HepG2 (cell line): ENCODE measurements at regions of chr1 and their contacts with region 1.

Region 1: GRCh38 chr1:248837794-248838356 is at the start of gene ZNF672:
- DNase-seq: peak; percentile 96
- ATAC-seq: peak; percentile 92
- H3K4me3 ChIP-seq: peak within 1 kb of the TSS; percentile 58 to 87 (median 83)
- H3K27ac ChIP-seq: peak within 1 kb of the TSS; percentile 96
- H3K4me1 ChIP-seq: peaks cover 66% of the 10 kb centered on the region
- H3K27me3 ChIP-seq: no peaks in the 10 kb centered on the region; a peak in 1 of 5 replicates
- CTCF ChIP-seq: 0 out of 2 replicates have a peak, but pooled peaks have one; percentile 9
- EP300 ChIP-seq: no peak
- POLR2A ChIP-seq: peak; percentile 80 to 87
- RAD21 ChIP-seq: no peak
- total RNA-seq, gene ZNF672: 16.8 and 17.2 TPM in 2 replicates

Region 2: GRCh38 chr1:248696261-248696660 is 141.6 kb before region 1 on chr1:
- CTCF ChIA-PET with region 1: no interaction called
- POLR2A ChIA-PET with region 1: no interaction called
- in situ Hi-C with region 1: no loop called
- intact Hi-C with region 1: loop called (anchors 1 kb)
- DNase-seq: peak; percentile 63
- ATAC-seq: peak; percentile 98
- H3K4me3 ChIP-seq: no peak overlapping the region
- H3K27ac ChIP-seq: no peak overlapping the region
- H3K4me1 ChIP-seq: no peaks in the 10 kb centered on the region
- H3K27me3 ChIP-seq: no peaks in the 10 kb centered on the region
- CTCF ChIP-seq: peak; percentile 79
- EP300 ChIP-seq: no peak
- POLR2A ChIP-seq: no peak
- RAD21 ChIP-seq: peak; percentile 65

Region 3: DNA sequence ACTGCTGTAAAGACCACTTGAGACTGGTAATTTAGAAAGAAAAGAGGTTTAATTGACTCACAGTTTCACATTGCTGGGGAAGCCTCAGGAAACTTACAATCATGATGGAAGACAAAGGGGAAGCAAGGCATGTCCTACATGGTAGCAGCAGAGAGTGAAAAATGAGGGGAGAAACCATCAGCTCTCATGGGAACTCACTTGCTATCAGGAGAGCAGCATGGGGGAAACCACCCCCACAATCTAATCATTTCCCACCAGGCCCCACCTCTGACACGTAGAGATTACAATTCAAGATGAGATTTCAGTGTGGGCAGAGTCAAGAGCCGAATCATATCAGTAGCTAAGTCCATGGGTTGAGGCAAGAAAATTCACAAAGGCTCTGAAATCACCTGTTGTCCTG is 58.5 kb before region 1 on chr1:
- CTCF ChIA-PET with region 1: no interaction called
- POLR2A ChIA-PET with region 1: no interaction called
- in situ Hi-C with region 1: no loop called
- intact Hi-C with region 1: no loop called
- DNase-seq: no peak
- ATAC-seq: no peak
- H3K4me3 ChIP-seq: no peak overlapping the region
- H3K27ac ChIP-seq: no peak overlapping the region
- H3K4me1 ChIP-seq: no peaks in the 10 kb centered on the region; the same call in 1 of the 2 replicates
- H3K27me3 ChIP-seq: no peaks in the 10 kb centered on the region
- CTCF ChIP-seq: no peak
- EP300 ChIP-seq: no peak
- POLR2A ChIP-seq: no peak
- RAD21 ChIP-seq: no peak

Region 4: GRCh38 chr1:248825909-248826760 is 11.7 kb before region 1 on chr1 and contains the start of gene SH3BP5L:
- CTCF ChIA-PET with region 1: no interaction called
- POLR2A ChIA-PET with region 1: interaction called, 108 read pairs
- in situ Hi-C with region 1: no loop called
- intact Hi-C with region 1: loop called (anchors 1 kb)
- DNase-seq: peak; percentile 93
- ATAC-seq: peak; percentile 94
- H3K4me3 ChIP-seq: peak within 1 kb of the TSS; percentile 71 to 92 (median 81)
- H3K27ac ChIP-seq: peak within 1 kb of the TSS; percentile 99
- H3K4me1 ChIP-seq: peaks cover 69% of the 10 kb centered on the region
- H3K27me3 ChIP-seq: no peaks in the 10 kb centered on the region; a peak in 1 of 5 replicates
- CTCF ChIP-seq: peak; percentile 88
- EP300 ChIP-seq: peak in 1 of 2 experiments; percentile 5; a peak in 2 of 4 replicates
- POLR2A ChIP-seq: peak; percentile 79 to 90
- RAD21 ChIP-seq: 0 out of 2 replicates have a peak, but pooled peaks have one; percentile 28
- total RNA-seq, gene SH3BP5L: 10.2 and 14.9 TPM in 2 replicates

Region 5: DNA sequence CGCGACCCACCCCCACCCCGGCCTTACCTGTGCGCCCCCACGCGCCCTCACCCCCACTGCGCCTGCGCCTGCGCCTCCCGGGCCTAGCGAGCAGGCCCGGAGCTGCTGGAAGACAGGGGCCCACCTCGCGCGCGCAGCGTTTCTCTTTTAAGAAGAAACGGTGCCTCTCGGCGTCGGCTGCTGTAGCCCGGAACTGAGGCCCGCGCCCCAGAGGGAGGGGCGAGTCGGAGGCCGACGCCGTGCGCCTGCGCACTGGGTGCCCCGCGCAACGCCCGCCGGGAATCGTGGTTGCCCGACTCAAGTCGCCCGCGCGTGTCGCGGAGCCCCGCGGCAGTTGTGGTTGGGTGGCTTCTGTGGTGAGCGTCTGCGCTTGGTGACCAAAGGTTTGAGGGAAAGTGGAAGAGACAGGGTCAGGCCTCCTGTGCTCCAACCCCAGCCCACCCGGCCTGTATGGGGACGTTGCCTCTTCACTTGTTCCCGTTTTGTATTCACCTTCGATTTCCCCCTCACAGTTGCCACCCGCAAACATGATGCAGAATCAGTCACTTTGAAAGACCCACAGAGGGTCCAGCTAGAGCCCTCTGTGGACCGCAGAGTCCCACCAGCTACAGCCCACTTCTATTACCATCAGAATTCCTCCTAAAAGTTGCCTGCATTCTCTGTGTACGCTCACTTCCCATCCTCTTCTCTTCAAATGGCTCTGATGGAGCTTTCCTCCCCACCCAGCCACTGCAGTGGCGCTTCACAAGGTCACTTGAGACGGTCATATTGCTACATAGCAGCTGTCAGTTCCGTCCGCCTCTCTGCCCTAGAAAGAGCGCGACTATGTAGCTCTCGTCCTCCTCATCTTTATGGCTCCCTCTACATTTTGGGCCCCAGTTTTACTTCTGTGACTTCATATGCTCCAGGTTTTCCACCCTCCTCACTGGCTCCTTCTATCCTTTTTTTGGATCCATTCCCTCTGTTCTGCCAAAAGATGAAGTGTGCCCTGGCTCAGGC is 21.3 kb after region 1 on chr1 and contains the start of gene ZNF692:
- CTCF ChIA-PET with region 1: interaction called, 3 read pairs
- POLR2A ChIA-PET with region 1: interaction called, 83 read pairs
- in situ Hi-C with region 1: no loop called
- intact Hi-C with region 1: loop called (anchors 1 kb)
- DNase-seq: peak; percentile 93
- ATAC-seq: peak; percentile 77
- H3K4me3 ChIP-seq: peak within 1 kb of the TSS; percentile 62 to 87 (median 83)
- H3K27ac ChIP-seq: peak within 1 kb of the TSS; percentile 79
- H3K4me1 ChIP-seq: peaks cover 51% of the 10 kb centered on the region
- H3K27me3 ChIP-seq: no peaks in the 10 kb centered on the region; a peak in 1 of 5 replicates
- CTCF ChIP-seq: no peak
- EP300 ChIP-seq: no peak
- POLR2A ChIP-seq: no peak; a peak in 1 of 4 replicates
- RAD21 ChIP-seq: no peak
- total RNA-seq, gene ZNF692: 6.2 and 27.3 TPM in 2 replicates

Region 6: DNA sequence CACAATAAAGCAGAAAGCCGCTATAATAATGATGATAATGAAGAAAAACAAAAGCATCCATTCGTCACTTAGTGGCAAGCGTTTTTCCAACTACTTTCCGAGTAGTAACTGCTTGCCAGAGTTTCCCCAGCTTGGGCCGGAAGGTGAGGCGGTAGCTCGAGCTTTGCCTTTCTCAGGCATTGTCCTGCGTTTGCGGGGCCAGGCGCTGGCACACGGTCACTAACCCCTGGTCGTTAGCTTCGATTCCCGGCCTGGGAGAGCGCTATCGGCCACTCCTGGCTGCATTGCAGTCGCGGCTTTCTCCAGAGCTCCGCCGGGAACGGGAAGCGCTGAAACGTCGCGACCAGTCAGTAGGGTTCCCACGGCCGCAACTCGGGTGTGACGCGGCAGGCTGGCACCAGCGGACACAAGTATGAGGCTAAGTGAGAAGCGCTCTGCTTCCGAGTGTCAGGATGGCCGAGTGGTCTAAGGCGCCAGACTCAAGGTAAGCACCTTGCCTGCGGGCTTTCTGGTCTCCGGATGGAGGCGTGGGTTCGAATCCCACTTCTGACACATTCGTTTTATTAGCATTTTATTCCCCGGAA is 35.6 kb after region 1 on chr1:
- CTCF ChIA-PET with region 1: no interaction called
- POLR2A ChIA-PET with region 1: interaction called, 25 read pairs
- in situ Hi-C with region 1: no loop called
- intact Hi-C with region 1: no loop called
- DNase-seq: peak; percentile 92
- ATAC-seq: peak; percentile 92
- H3K4me3 ChIP-seq: peak overlapping the region; percentile 60 to 87 (median 85)
- H3K27ac ChIP-seq: peak overlapping the region; percentile 95
- H3K4me1 ChIP-seq: peaks cover 9% of the 10 kb centered on the region
- H3K27me3 ChIP-seq: no peaks in the 10 kb centered on the region; a peak in 1 of 5 replicates
- CTCF ChIP-seq: peak; percentile 26; the same call in 1 of the 2 replicates
- EP300 ChIP-seq: no peak; a peak in 1 of 4 replicates
- POLR2A ChIP-seq: peak; percentile 28 to 72; a peak in 3 of 4 replicates
- RAD21 ChIP-seq: peak; percentile 32; the same call in 1 of the 2 replicates

Region 7: DNA sequence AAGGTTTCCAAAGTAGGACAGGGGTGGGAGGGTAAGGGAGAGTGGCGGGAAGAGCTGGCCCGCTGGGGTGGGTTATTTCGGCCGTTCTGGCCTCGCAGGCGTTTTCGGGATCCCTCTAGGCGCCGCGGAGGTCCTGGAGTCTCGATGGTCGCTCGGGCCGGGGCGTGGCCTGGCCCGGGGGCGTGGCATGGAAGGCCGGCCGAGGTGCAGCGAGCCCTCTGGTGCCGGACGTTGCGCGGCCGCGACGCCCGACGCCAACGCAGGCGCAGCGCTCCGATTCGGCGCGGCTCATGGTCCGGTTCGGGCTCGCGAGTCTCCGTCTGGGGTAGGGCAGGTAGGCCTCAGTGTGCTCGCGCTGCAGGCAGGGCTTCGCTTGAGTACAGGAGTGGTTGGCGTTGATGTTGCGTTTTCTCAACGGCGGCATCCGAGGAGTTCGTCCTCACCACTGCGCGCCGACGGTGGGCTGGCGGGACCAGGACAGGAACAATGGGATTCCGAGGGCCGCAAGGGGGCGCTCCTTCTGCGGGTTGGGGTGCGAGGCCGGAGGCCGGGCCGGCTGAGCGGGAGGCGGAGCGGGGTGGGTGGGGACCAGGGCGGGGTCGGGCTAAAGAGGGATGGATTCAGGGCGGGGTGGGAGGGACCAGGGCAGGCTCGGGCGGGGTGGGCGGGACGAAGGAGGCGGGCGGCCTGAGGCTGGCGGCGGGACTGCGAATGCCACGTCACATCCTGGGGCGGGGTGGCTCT is 68.3 kb after region 1 on chr1 and contains the start of gene PGBD2:
- CTCF ChIA-PET with region 1: no interaction called
- POLR2A ChIA-PET with region 1: interaction called, 13 read pairs
- in situ Hi-C with region 1: no loop called
- intact Hi-C with region 1: loop called (anchors 1 kb)
- DNase-seq: peak; percentile 81
- ATAC-seq: peak; percentile 97
- H3K4me3 ChIP-seq: peak within 1 kb of the TSS; percentile 84 to 90 (median 89)
- H3K27ac ChIP-seq: peak within 1 kb of the TSS; percentile 97
- H3K4me1 ChIP-seq: peaks cover 25% of the 10 kb centered on the region
- H3K27me3 ChIP-seq: no peaks in the 10 kb centered on the region; a peak in 1 of 5 replicates
- CTCF ChIP-seq: peak; percentile 89
- EP300 ChIP-seq: no peak; a peak in 1 of 4 replicates
- POLR2A ChIP-seq: peak; percentile 95 to 97
- RAD21 ChIP-seq: peak; percentile 78
- total RNA-seq, gene PGBD2: 7.4 and 7.9 TPM in 2 replicates